Adrenal gland (tissue), 19 donors: ENCODE measurements at regions of chr11 and their contacts with region 1.

Region 1: GRCh38 chr11:67382276-67383136 is 9.1 kb upstream of the CLCF1 start:
- DNase-seq: peak; percentile 72 to 92 (median 82)
- H3K4me3 ChIP-seq: no peak overlapping the region
- H3K27ac ChIP-seq: no peak overlapping the region
- H3K4me1 ChIP-seq: no peaks in the 10 kb centered on the region
- H3K27me3 ChIP-seq: no peaks in the 10 kb centered on the region
- CTCF ChIP-seq: peak; percentile 95 to 99 (median 98)
- POLR2A ChIP-seq: no peak

Region 2: GRCh38 chr11:67317205-67317887 is 65.2 kb before region 1 on chr11:
- intact Hi-C with region 1: no loop called
- DNase-seq: peak; percentile 95 to 99 (median 97)
- H3K4me3 ChIP-seq: peak overlapping the region; percentile 26 to 90 (median 60)
- H3K27ac ChIP-seq: peak overlapping the region; percentile 44 to 94 (median 80)
- H3K4me1 ChIP-seq: peaks cover 0 to 12% of the 10 kb centered on the region in 2 donors
- H3K27me3 ChIP-seq: no peaks in the 10 kb centered on the region
- CTCF ChIP-seq: peak; percentile 81 to 100 (median 98)
- POLR2A ChIP-seq: peak; percentile 34 to 46

Region 3: DNA sequence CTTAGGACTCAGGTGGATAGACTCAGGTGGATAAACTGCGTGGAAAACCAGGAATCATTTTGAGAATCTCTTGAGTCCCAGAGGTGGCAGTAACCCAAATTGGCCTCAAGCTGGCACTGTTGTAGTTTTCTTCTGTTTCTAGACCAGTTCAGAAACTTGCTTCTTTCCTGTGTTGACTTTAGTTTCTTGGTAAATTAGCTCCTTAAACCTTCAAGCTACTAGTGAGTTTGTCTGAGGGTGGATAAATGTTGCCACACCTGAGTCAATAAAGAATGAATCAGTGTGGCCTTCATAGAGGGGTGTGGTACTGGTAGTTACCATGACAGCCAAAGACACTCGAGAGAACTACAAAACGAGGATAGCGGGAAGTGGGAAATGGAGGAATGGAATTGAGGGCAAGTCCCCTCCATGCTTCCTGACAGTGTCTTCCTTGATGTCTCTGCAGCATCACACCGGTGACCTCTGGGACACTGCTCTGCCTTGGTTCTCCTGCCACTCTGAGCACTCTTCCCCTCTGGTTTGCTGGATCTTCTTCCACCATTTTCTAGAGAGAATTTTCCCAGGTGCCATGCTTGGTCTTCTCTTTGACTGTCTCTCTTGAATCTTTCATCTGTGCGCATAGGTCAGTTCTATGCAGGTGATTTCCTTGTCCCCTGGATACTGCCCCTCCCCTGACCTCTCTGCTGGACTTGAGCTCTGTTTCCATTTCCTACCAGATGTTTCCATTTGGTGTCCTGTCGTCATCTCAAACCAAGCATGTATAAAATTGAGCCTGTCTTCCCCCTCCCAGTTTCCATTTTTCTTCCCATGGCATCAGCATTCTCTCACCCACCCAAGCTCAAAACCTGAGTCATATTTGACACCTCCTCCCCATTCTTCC is 36.3 kb before region 1 on chr11:
- intact Hi-C with region 1: loop called in 1 of 2 experiments (anchors 5 kb)
- DNase-seq: peak in 2 of 7 donors; percentile 46 to 61
- H3K4me3 ChIP-seq: no peak overlapping the region
- H3K27ac ChIP-seq: no peak overlapping the region
- H3K4me1 ChIP-seq: peaks cover 0 to 6% of the 10 kb centered on the region in 2 donors
- H3K27me3 ChIP-seq: no peaks in the 10 kb centered on the region
- CTCF ChIP-seq: peak; percentile 26 to 56 (median 44)
- POLR2A ChIP-seq: no peak

Region 4: DNA sequence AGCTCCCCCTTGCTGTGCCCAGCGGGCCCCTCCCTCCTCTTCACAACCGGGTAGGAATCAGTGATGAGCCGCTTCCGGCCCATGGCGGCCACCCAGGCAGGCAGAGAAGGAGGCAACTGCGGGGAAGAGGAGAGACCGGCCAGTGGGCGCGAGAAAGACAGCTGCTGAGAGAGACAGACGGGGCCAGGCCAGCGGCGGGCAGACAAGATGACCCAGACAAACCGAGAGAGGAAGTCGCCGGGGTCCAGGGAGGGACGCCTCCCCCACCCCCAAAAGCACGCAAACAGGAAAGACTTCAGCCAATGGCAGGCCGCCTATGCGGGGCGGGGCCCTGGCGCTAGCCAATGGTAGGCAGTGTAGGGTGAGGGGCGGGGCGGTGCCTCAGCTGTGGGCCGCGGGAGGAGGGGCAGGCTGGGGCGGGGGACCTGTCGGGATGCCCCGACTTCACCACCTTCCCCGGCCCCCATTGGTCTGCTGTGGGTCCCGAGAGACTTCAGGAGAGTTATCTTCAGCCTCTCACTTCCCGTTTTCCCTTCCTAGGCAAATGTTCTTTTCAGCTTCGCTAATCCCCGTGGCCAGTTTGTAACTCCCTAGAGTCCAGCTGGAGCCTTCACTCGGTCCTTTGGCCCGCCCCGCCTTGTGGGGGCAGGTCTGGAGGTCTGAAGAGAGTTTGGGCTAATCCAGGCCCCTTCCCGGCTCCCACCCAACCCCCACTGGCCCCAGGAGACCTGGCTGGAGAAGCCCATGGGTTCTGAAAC is 29.0 kb before region 1 on chr11 and contains the start of gene POLD4:
- intact Hi-C with region 1: loop called (anchors 2 to 5 kb)
- DNase-seq: peak; percentile 98 to 100 (median 99)
- H3K4me3 ChIP-seq: peak within 1 kb of the TSS; percentile 13 to 82 (median 56)
- H3K27ac ChIP-seq: peak within 1 kb of the TSS; percentile 91 to 99 (median 98)
- H3K4me1 ChIP-seq: peaks cover 37 to 64% of the 10 kb centered on the region in 2 donors
- H3K27me3 ChIP-seq: no peaks in the 10 kb centered on the region
- CTCF ChIP-seq: no peak
- POLR2A ChIP-seq: peak; percentile 87 to 88
- total RNA-seq, gene POLD4: 60.5 to 166 (median 89.8) TPM